OCI-LY7 (cell line): ENCODE measurements at regions of chr5 and their contacts with region 1.

Region 1: GRCh38 chr5:80101993-80102392 is 66.8 kb downstream of the THBS4 start:
- DNase-seq: no peak
- H3K4me3 ChIP-seq: no peak overlapping the region
- H3K27ac ChIP-seq: no peak overlapping the region
- H3K4me1 ChIP-seq: no peaks in the 10 kb centered on the region
- CTCF ChIP-seq: no peak

Region 2: DNA sequence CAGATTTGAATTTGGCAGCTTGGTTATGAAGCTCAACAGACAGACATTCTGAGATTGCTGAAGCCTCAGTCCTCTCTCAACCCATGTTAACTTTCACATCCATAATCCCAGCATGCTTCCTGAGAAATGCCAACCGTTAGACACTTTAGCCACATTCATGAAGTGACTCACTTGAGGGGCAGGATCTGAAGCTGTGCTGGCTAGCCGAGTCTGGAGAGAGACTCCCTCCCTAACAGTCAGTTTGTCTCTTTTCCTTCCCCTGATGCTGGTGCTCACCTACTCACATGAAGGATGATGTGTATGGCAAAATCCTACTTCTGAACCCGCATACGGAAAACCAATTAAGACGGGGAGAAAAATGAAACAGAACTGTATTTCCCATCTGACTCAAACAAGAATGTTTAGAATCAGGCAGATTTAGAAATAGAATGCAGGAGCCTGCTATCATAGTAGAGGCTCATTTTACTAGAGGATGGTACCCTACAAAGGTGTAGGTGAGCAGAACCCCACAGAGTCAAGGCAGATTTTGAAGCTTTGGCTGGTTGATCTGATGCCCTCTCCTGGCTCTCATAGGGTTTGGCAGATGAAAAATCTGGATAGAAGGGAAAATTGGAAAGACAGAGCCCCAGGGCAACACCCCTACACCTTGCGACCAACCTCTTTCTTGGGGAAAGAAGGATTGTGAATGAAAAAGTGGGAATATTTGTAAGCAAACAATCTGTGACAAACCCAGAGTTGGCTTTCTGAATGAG is 1302.6 kb before region 1 on chr5:
- CTCF ChIA-PET with region 1: no interaction called
- POLR2A ChIA-PET with region 1: no interaction called
- intact Hi-C with region 1: no loop called
- DNase-seq: no peak
- H3K4me3 ChIP-seq: no peak overlapping the region
- H3K27ac ChIP-seq: no peak overlapping the region
- H3K4me1 ChIP-seq: peaks cover 20% of the 10 kb centered on the region
- CTCF ChIP-seq: no peak

Region 3: DNA sequence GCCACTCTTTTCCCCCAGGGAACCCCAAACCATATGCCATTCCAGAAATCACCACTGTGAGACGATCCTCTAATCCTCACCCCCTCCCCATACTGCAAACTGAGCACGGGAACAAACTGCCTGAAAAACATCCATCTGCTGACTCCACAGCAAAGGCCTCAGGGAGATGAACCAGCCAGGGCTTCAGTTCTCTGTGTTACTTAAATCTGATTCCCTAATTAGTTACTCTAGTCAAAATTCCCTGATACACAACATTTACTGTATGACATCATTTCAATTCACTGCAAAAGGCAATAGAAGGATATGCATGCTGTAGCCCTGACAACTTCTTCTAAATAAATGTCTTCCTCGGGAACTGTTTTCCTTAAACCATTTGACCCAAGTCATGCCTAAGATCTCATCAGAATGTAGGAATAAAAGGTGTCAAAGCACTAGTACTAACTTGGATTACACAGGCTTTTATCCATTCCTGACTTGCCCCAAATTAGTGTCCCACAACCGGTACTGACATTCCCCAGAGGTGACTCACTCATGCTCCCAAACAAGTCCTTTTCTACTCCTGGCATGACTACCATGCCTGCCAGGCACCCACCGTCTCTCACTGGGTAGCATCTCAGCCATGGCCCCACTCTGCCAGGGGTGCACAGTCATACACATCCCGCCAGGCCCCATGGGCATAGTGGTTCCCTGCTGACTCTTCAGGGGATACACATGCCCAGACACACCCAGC is 145.9 kb before region 1 on chr5:
- CTCF ChIA-PET with region 1: no interaction called
- POLR2A ChIA-PET with region 1: no interaction called
- intact Hi-C with region 1: no loop called
- DNase-seq: no peak
- H3K4me3 ChIP-seq: no peak overlapping the region
- H3K27ac ChIP-seq: no peak overlapping the region
- H3K4me1 ChIP-seq: peaks cover 6% of the 10 kb centered on the region
- CTCF ChIP-seq: no peak

Region 4: GRCh38 chr5:80308526-80308925 is 206.5 kb after region 1 on chr5:
- CTCF ChIA-PET with region 1: no interaction called
- POLR2A ChIA-PET with region 1: interaction called, 10 read pairs
- intact Hi-C with region 1: no loop called
- DNase-seq: no peak
- H3K4me3 ChIP-seq: no peak overlapping the region
- H3K27ac ChIP-seq: no peak overlapping the region
- H3K4me1 ChIP-seq: no peaks in the 10 kb centered on the region
- CTCF ChIP-seq: no peak

Region 5: GRCh38 chr5:80985600-80986228 is 883.7 kb after region 1 on chr5:
- CTCF ChIA-PET with region 1: no interaction called
- POLR2A ChIA-PET with region 1: no interaction called
- intact Hi-C with region 1: no loop called
- DNase-seq: no peak
- H3K4me3 ChIP-seq: no peak overlapping the region
- H3K27ac ChIP-seq: no peak overlapping the region
- H3K4me1 ChIP-seq: no peaks in the 10 kb centered on the region
- CTCF ChIP-seq: no peak